ENCODE measurements at regions of chr12 and their contacts with region 1.

Region 1: DNA sequence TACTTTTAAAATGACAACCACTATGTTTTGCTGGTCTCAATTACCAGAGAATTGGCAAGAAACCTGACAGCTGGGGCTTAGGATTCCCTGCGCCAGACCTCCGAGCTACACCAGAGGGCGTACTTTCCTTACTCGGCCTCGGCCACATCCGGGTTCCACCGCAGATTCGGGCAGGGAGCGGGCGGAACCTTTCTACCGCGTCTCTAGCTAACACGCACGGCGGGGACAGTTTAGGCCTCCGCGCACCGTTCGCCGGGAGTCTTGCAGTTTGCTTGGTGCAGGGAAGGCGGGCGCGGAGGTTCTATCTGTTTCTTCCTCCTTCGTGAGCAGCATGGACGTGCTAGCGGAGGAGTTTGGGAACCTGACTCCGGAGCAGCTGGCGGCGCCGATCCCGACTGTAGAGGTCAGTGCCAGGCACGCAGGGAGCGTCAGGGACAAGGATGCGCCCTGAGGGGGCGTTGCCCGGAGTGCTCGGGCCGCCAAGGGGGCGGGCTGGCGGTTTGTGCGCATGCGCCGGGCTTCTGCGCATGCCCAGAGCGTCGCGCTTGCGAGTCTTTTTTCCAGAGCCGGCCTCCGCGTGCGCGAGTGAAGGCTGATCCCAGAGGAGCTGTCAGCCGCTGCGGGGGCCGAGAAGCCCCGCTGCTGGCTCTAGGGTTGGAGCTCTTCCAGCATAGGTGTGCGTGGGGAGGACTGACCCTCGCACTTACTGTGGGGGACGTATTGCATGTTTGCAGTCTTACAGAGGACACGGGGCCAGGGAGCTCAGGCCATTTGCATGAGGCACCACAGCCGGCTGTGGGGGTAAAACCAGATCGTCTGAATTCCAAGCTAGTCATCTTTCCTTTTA is at the start of gene POLR3B:
- DNase-seq: peak; percentile 91 to 99 (median 96)

Region 2: GRCh38 chr12:105235732-105236476 is 1121.9 kb before region 1 on chr12 and contains the start of gene APPL2:
- intact Hi-C with region 1: loop called (anchors 10 kb)
- DNase-seq: peak; percentile 87 to 98 (median 90)

Region 3: GRCh38 chr12:106170285-106170684 is 187.5 kb before region 1 on chr12:
- intact Hi-C with region 1: no loop called
- DNase-seq: peak in 1 of 10 donors; percentile 26

Region 4: GRCh38 chr12:106302401-106303201 is 55.2 kb before region 1 on chr12 and contains the start of gene TCP11L2:
- intact Hi-C with region 1: loop called (anchors 5 kb)
- DNase-seq: peak; percentile 79 to 98 (median 88)

Region 5: DNA sequence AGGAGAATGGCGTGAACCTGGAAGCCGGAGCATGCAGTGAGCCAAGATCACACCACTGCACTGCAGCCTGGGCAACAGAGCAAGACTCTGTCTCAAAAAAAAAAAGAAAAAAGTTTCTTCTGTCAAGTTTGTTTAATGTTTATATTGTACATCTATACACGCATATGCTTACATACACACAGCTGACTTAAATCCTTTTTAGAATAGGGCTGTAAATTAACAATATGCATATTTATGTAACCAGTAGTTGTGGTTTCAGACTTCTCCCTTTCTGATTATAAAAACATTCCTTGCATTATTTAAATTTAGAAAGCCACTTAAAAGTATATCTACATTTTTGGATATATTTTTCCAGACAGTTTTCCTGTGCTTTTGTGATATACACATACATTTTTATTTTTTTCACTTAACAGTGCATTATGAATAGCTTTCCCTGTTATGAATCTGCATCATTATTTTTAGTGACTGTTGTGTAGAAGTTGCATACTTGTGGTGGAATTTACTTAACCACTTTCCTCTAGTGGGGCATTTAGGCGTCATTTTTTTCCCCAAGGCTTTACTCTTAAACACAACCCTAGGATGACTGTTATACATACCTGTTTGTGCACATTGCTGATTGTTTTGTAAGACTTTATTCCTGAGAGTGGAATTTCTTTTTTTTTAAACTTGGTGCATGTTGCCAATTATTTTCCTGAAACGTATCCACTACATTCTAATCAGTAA is 29.2 kb after region 1 on chr12:
- intact Hi-C with region 1: loop called (anchors 1 kb)
- DNase-seq: no peak

Region 6: GRCh38 chr12:106428384-106428783 is 70.6 kb after region 1 on chr12:
- intact Hi-C with region 1: no loop called
- DNase-seq: peak in 4 of 10 donors; percentile 12 to 63 (median 16)

Region 7: GRCh38 chr12:106774005-106774807 is 416.4 kb after region 1 on chr12 and contains the start of gene RIC8B:
- intact Hi-C with region 1: loop called (anchors 5 kb)
- DNase-seq: peak; percentile 95 to 99 (median 96)

Measured in posterior cingulate gyrus (tissue), 11 donors.